Activated CD8-positive, alpha-beta memory T cell treated with anti-CD3 and anti-CD28 coated beads, Interleukin-2, amount 10 ng/mL, durations not matched to agents 7 days and 5 days (primary cell): ENCODE measurements at regions of chr11 and their contacts with region 1.

Region 1: GRCh38 chr11:250740-251299 is 14.0 kb downstream of the PSMD13 start:
- DNase-seq: peak; percentile 83
- ATAC-seq: peak; percentile 97
- H3K4me3 Mint-ChIP-seq: no peak overlapping the region
- H3K27ac Mint-ChIP-seq: peak overlapping the region; percentile 49
- H3K4me1 Mint-ChIP-seq: peaks cover 12% of the 10 kb centered on the region
- H3K27me3 Mint-ChIP-seq: no peaks in the 10 kb centered on the region

Region 2: DNA sequence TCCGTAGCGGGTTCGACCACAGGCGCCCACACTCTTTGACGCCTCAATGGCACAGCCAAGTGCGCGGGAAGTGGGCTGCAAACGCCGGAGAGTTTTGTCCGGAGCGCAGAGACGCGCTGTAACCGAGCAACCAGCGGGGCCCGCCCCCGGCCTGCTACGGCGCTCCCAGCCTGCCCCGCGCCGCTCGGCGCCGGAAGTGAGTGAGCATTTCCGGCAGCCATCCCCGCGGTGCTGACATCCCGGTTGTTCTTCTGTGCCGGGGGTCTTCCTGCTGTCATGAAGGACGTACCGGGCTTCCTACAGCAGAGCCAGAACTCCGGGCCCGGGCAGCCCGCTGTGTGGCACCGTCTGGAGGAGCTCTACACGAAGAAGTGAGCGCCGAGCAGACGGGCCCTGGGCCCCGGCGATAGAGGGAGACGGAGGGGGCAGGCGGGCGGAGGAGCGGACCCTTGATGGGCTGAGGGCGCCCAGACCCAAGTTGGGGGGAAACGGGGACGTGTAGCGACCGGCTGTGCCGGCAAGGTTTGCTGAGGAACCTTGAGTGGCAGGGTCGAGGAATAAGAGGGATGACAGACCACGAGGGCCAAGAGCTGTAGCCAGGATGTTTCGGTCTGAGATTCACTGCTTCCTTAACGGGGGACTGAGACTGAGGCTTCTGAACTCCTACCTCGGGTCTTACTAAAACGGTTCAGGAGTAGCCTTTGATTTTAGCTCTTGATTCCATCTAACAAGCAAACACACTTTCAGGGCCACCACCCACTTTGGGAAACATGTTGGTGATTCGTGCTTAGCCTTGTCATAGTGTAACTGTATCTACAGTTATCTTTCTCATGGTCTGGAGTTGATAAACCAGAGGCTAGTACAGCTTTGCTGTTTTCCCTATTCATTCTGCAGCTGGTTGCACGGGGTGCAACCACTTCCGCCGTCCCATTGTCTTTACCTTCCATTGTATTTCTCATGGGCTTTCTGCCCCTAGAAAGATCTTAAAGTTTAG is 13.7 kb before region 1 on chr11 and contains the start of gene PSMD13:
- CTCF ChIA-PET with region 1: interaction called, 19 read pairs
- DNase-seq: peak; percentile 92
- ATAC-seq: peak; percentile 89
- H3K4me3 Mint-ChIP-seq: peak within 1 kb of the TSS; percentile 83
- H3K27ac Mint-ChIP-seq: peak within 1 kb of the TSS; percentile 99
- H3K4me1 Mint-ChIP-seq: peaks cover 46% of the 10 kb centered on the region
- H3K27me3 Mint-ChIP-seq: no peaks in the 10 kb centered on the region
- total RNA-seq, gene PSMD13: 166 to 199 TPM

Region 3: DNA sequence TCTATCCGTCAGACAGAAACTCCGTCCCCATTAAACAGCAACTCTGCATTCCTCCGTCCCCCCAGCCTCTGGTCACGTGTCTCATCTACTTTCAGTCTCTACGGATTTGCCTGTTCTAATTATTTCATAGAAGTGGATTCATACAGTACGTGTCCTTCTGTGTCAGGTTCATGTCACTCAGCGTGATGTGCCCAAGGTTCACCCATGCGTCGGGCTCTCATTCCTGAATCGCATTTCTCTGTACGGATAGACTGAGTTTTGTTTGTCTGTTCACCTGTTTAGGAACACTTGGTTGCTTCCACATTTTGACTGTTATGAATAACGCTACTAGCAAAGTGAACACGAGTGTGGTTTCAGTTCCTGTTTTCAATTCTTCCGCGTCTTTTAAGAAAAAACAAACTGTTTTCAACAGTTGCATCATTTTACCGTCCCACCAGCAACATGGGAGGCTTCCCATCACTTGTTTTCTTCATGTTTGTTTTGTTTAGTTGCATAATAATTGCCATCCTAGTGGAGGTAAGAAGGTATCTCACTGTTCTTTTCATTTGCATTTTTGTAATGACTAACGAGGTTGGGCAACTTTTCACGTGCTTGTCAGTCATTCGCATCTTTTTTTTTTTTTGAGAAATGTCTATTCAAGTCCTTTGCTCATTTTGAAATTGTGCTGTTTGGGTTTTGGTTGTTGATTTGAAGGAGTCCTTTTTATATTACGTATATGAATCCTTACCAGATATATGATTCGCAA is 18.5 kb after region 1 on chr11:
- CTCF ChIA-PET with region 1: interaction called, 35 read pairs
- DNase-seq: peak; percentile 80
- ATAC-seq: peak; percentile 57
- H3K4me3 Mint-ChIP-seq: peak overlapping the region; percentile 86
- H3K27ac Mint-ChIP-seq: peak overlapping the region; percentile 97
- H3K4me1 Mint-ChIP-seq: peaks cover 32% of the 10 kb centered on the region
- H3K27me3 Mint-ChIP-seq: peaks cover 11% of the 10 kb centered on the region

Region 4: GRCh38 chr11:279966-280582 is 29.3 kb after region 1 on chr11:
- CTCF ChIA-PET with region 1: interaction called, 29 read pairs
- DNase-seq: peak; percentile 59
- ATAC-seq: peak; percentile 59
- H3K4me3 Mint-ChIP-seq: peak overlapping the region; percentile 50
- H3K27ac Mint-ChIP-seq: no peak overlapping the region
- H3K4me1 Mint-ChIP-seq: peaks cover 46% of the 10 kb centered on the region
- H3K27me3 Mint-ChIP-seq: peaks cover 61% of the 10 kb centered on the region

Region 5: DNA sequence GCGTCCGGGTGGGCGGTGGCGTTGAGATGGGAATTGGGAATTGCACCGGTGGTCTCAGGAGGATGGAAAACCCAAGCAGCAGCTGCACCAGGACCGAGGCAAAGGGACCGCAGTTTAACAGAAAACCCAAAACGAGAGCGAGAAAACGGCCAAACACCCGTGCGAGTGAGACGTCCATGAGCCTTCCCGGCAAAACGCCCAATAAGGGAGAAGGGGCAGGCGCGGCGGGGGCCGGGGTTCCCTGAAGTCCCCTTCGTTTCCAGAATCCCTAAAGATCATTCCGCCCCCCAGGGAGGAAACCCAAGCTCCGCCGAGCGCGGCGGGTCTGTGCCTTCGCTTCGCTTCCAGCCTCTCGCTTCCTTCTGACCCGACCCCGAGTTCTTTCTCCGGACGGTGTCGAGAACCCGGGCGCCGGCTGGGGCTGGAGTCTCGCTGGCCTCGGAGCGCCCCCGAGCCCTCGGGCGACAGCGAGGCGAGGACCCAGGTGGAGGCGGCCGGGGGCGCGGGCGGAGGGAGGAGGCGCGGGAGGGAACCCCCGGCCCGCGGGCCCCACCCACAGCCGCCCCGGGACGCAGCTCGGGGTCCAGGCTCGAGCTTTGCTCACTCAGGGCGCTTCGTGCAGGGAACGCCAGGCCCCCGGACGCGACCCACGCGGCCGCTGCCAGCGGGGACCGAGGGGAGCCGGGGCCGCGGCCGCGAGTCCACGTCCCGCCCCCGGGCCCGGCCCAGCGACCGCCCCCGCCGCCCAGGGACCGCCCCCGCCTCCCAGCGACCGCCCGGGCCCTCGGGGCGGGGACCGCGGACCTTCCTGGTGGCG is 37.7 kb after region 1 on chr11 and contains the start of gene PGGHG:
- CTCF ChIA-PET with region 1: interaction called, 16 read pairs
- DNase-seq: no peak
- ATAC-seq: peak; percentile 72
- H3K4me3 Mint-ChIP-seq: peak within 1 kb of the TSS; percentile 95
- H3K27ac Mint-ChIP-seq: peak within 1 kb of the TSS; percentile 94
- H3K4me1 Mint-ChIP-seq: peaks cover 44% of the 10 kb centered on the region
- H3K27me3 Mint-ChIP-seq: peaks cover 11% of the 10 kb centered on the region
- total RNA-seq, gene PGGHG: 214 to 229 TPM

Region 6: GRCh38 chr11:299951-300735 is 49.3 kb after region 1 on chr11:
- CTCF ChIA-PET with region 1: interaction called, 26 read pairs
- DNase-seq: no peak
- ATAC-seq: no peak
- H3K4me3 Mint-ChIP-seq: no peak overlapping the region
- H3K27ac Mint-ChIP-seq: no peak overlapping the region
- H3K4me1 Mint-ChIP-seq: peaks cover 46% of the 10 kb centered on the region
- H3K27me3 Mint-ChIP-seq: peaks cover 20% of the 10 kb centered on the region

Region 7: GRCh38 chr11:363948-364761 is 113.3 kb after region 1 on chr11:
- CTCF ChIA-PET with region 1: interaction called, 40 read pairs
- DNase-seq: peak; percentile 67
- ATAC-seq: peak; percentile 75
- H3K4me3 Mint-ChIP-seq: no peak overlapping the region
- H3K27ac Mint-ChIP-seq: peak overlapping the region; percentile 13
- H3K4me1 Mint-ChIP-seq: peaks cover 13% of the 10 kb centered on the region
- H3K27me3 Mint-ChIP-seq: peaks cover 33% of the 10 kb centered on the region